ENCODE measurements at regions of chr18 and their contacts with region 1.

Region 1: GRCh38 chr18:5868218-5869115 is 26.9 kb downstream of the TMEM200C start:
- DNase-seq: peak; percentile 45
- CTCF ChIP-seq: peak; percentile 79

Region 2: DNA sequence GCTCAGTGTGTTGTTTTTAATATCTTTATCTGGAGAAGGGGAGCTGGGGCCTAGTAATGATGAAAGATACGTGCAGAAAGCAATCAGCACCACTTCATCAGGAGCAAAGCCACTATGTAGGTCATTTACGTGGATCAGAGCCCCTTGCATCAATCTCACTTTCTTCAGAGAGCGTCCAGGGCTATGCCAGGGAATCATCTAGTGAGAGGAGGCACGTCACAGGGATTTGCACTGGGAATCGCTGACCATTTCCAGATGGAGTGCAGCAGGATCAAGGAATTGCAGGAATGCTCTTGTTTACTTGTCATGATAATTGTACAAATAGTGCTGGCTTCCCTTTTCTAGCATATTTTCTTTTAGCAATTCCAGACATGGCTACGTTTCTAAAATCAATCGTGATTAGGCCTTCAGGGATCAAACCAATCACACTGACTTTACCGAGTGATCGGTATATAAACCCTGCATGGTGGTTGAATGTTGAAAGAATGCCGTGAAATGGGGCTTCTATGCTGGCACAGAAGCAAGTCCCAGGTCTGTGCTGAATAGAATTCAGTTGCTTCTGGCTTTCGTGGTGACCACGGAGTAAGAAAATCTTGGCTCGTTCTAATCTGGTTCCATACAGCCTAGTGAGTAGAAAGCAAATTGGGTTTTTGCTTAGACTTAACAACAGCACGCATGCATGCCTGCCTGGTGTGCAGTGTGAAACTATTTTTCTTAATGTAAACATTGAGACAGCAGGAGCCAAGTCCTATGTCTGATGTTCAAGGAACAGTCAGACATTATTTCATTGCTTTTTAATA is 96.0 kb before region 1 on chr18:
- in situ Hi-C with region 1: no loop called
- DNase-seq: no peak
- CTCF ChIP-seq: no peak

Region 3: DNA sequence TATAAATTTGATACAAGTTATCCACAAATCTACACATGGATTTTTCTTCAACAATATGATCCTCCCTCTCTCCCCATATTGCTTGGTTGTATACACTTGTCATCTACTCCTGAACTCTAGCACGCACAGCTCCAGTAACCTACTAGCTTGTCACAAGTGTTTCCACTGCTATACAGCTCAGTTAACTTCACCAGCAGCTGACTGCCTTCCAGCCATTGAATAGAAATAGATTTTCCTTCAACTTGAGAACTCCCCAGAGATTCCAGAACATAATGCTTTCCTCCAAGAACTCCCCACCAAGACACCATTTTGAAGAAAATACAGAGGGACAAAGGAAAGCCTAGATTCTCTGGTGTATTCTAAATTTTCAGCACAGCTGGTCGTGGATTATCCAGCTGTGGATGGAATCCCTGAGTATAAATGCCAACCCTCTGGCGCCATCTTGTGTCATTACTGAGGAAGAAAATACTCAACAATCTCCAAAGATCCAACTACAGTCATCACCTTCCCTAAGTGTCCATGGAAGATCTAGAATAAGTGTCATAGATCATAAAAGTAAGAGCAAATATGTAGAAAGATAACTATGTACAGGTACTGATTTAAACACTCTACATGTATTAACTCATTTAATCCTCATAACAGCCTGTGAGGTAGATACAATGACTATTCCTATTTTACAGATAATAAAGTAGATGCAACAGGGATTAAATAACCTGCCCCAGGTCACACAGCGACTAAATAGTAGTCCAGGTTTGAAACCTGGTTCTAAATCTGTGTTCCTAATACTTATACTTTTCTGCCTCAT is 1017.7 kb after region 1 on chr18:
- in situ Hi-C with region 1: loop called (anchors 25 kb)
- DNase-seq: peak; percentile 42
- CTCF ChIP-seq: peak; percentile 52

Measured in GM13976 (cell line).